CD4-positive, alpha-beta memory T cell (primary cell): ENCODE measurements at regions of chr1 and their contacts with region 1.

Region 1: DNA sequence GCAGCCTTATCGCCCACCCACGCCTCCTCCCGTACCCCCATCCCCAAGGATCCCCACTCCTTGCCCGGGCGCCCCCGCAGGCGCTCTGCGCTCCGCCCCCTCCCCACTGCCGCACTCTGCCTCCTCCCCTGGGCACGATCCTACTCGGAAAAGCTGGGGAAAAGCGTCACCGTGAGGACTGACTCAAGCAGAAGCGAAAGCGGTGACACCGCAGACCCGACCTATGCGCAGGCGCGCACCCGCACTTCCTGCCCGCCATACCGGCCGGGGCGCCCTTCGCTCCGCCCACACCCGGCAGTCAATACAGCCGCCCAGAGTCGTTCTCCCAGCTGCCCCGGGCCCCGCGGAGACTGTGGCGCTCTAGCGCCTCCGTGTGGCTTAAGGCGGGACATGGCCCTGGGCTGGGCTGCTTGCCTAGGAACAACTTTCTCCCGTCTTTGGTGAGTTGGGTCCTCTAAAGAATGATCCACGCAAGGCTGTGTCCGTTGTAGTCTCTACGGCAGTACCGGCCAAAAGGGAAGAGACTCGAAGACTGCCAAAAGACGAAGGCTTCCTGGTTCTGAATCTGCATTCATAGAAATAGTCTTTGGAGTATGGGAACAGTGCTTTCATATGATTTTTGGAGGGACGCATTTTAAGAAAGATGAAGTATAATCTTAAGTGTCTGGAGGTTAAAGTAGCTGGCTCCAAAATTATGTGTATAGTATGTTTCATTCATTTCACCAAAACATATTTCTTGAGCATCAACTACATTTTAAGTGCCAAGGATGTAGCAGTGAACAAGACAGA is at the start of gene OMA1:
- DNase-seq: peak; percentile 96 to 98 (median 97)
- H3K4me3 ChIP-seq: peak within 1 kb of the TSS; percentile 78 to 88
- H3K4me3 Mint-ChIP-seq: peak within 1 kb of the TSS; percentile 93 to 99 (median 96)
- H3K27ac ChIP-seq: peak within 1 kb of the TSS; percentile 94
- H3K27ac Mint-ChIP-seq: peak within 1 kb of the TSS; percentile 95 to 99 (median 99)
- H3K4me1 ChIP-seq: peaks cover 17% of the 10 kb centered on the region
- H3K4me1 Mint-ChIP-seq: peaks cover 19 to 35% (median 23%) of the 10 kb centered on the region in 4 donors
- H3K27me3 ChIP-seq: no peaks in the 10 kb centered on the region
- H3K27me3 Mint-ChIP-seq: peaks cover 0 to 2% of the 10 kb centered on the region in 2 donors
- total RNA-seq, gene OMA1: 73.1 to 86.2 TPM

Region 2: DNA sequence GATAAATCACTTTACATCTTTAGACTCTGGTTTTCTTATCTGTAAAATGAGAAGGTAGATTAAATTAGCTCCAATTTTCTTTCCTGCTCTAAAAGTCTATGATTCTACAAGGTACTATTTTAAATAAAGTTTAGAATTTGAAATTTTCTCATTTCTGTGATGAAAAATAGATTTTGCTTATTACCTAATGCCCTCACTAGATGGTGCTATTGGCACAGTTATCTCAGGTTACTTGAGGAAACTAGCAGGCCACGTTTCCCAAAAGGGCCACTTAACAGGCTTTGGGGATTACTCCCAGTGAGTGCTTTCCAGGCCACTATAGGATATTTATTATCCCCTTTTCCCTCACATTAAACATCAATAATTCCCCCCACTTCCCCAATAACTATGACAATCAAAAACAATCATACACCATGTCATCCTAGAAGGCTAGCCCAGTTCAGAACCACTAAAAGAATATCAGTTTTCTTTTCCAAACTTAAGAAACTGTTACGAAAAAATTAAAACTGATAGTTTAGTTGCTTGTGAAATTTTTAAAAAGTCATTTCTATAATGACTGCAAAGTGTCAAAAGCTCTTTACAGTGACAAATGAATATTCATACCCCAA is 30.8 kb before region 1 on chr1:
- CTCF ChIA-PET with region 1: interaction called, 121 read pairs
- POLR2A ChIA-PET with region 1: interaction called, 24 read pairs
- intact Hi-C with region 1: loop called (anchors 1 kb)
- DNase-seq: peak; percentile 33 to 60 (median 55)
- H3K4me3 ChIP-seq: no peak overlapping the region
- H3K4me3 Mint-ChIP-seq: no peak overlapping the region
- H3K27ac ChIP-seq: no peak overlapping the region
- H3K27ac Mint-ChIP-seq: peak overlapping the region; percentile 54 to 92 (median 77)
- H3K4me1 ChIP-seq: peaks cover 4% of the 10 kb centered on the region
- H3K4me1 Mint-ChIP-seq: peaks cover 5 to 13% (median 7%) of the 10 kb centered on the region in 4 donors
- H3K27me3 ChIP-seq: no peaks in the 10 kb centered on the region
- H3K27me3 Mint-ChIP-seq: no peaks in the 10 kb centered on the region

Region 3: DNA sequence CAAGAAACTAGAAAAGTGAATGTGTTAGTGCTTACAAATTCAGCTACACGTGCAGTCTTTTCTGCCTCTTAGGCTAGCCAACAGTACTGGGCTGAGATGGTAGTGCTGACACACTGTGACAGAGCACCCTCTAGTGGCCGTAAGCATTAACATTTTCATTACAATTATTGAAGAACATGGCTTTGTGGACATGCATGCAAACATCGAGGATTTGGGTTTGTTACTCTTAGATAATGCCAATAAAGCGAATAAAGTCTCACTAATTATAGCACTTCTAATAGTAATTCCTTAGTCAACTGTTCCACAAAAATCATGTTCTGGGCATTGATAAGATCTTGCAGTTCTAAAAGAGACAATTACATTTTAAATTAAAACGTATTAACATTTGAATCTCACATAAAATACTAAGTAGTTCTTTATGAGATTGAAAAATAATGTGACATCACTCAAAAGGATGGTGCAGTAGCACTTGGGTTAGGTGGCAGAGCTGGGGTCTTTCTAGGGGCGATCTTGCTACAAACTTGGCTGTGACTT is 106.0 kb after region 1 on chr1:
- CTCF ChIA-PET with region 1: interaction called, 19 read pairs
- POLR2A ChIA-PET with region 1: interaction called, 4 read pairs
- intact Hi-C with region 1: loop called (anchors 1 kb)
- DNase-seq: peak; percentile 43 to 63 (median 60)
- H3K4me3 ChIP-seq: no peak overlapping the region
- H3K4me3 Mint-ChIP-seq: no peak overlapping the region
- H3K27ac ChIP-seq: no peak overlapping the region
- H3K27ac Mint-ChIP-seq: peak overlapping the region in 1 of 7 donors; percentile 32
- H3K4me1 ChIP-seq: peaks cover 14% of the 10 kb centered on the region
- H3K4me1 Mint-ChIP-seq: peaks cover 11 to 29% (median 15%) of the 10 kb centered on the region in 4 donors
- H3K27me3 ChIP-seq: no peaks in the 10 kb centered on the region
- H3K27me3 Mint-ChIP-seq: no peaks in the 10 kb centered on the region

Region 4: GRCh38 chr1:58699011-58699762 is 152.5 kb after region 1 on chr1:
- CTCF ChIA-PET with region 1: no interaction called
- POLR2A ChIA-PET with region 1: interaction called, 3 read pairs
- intact Hi-C with region 1: loop called (anchors 1 kb)
- DNase-seq: no peak
- H3K4me3 ChIP-seq: peak overlapping the region; percentile 85 to 89
- H3K4me3 Mint-ChIP-seq: peak overlapping the region; percentile 97 to 100 (median 98)
- H3K27ac ChIP-seq: peak overlapping the region; percentile 95
- H3K27ac Mint-ChIP-seq: peak overlapping the region; percentile 92 to 100 (median 99)
- H3K4me1 ChIP-seq: peaks cover 28% of the 10 kb centered on the region
- H3K4me1 Mint-ChIP-seq: peaks cover 15 to 28% (median 18%) of the 10 kb centered on the region in 4 donors
- H3K27me3 ChIP-seq: no peaks in the 10 kb centered on the region
- H3K27me3 Mint-ChIP-seq: no peaks in the 10 kb centered on the region

Region 5: GRCh38 chr1:59296358-59297256 is 749.9 kb after region 1 on chr1 and contains the start of gene FGGY:
- CTCF ChIA-PET with region 1: no interaction called
- POLR2A ChIA-PET with region 1: no interaction called
- intact Hi-C with region 1: loop called (anchors 5 kb)
- DNase-seq: peak; percentile 81 to 90 (median 82)
- H3K4me3 ChIP-seq: peak within 1 kb of the TSS; percentile 62 to 73
- H3K4me3 Mint-ChIP-seq: peak within 1 kb of the TSS; percentile 82 to 94 (median 91)
- H3K27ac ChIP-seq: peak within 1 kb of the TSS; percentile 69
- H3K27ac Mint-ChIP-seq: peak within 1 kb of the TSS; percentile 85 to 96 (median 95)
- H3K4me1 ChIP-seq: peaks cover 18% of the 10 kb centered on the region
- H3K4me1 Mint-ChIP-seq: peaks cover 4 to 25% (median 18%) of the 10 kb centered on the region in 4 donors
- H3K27me3 ChIP-seq: no peaks in the 10 kb centered on the region
- H3K27me3 Mint-ChIP-seq: no peaks in the 10 kb centered on the region
- total RNA-seq, gene FGGY: 5.3 to 8.8 TPM

Region 6: DNA sequence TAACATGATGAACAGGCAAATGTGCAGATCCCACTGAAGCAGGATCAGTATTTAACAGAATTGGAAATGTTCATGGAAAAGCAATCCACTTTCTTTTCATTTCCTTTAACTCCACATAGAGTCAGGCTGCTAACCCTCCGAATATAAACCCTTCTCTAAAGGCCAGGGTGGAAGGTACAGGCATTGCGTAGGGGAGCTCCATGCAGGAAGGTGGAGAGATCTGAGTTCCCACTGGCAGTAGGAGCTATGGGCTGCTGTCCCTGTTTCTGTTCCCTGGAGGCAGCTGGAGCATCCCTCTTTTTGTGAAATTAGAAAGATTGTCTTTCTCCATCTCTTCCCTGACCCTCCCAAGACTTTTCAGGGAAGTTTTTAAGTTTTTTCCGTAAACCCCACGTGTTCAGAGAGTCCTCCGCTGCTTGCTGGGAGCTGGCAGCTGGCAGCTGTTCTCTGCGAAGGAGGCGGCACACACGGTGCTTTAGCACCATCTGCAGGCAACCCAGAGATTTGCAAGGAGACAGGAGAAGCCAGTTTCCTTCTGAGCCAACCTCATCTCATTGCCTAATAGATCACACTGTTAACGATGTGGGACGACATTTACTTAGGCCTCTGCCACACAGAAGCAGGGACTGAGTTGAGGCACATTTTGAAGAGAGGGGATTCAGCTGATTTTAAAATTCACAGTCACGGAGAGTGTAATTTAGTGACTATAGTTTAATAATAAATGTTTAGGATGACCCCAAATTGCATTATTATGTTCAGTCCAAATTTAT is 1212.6 kb after region 1 on chr1:
- CTCF ChIA-PET with region 1: interaction called, 7 read pairs
- POLR2A ChIA-PET with region 1: no interaction called
- intact Hi-C with region 1: loop called (anchors 1 kb)
- DNase-seq: peak; percentile 58 to 67 (median 63)
- H3K4me3 ChIP-seq: no peak overlapping the region
- H3K4me3 Mint-ChIP-seq: peak overlapping the region in 3 of 8 donors; percentile 47 to 59 (median 59)
- H3K27ac ChIP-seq: no peak overlapping the region
- H3K27ac Mint-ChIP-seq: peak overlapping the region in 1 of 7 donors; percentile 53
- H3K4me1 ChIP-seq: peaks cover 3% of the 10 kb centered on the region
- H3K4me1 Mint-ChIP-seq: peaks cover 0 to 4% (median 3%) of the 10 kb centered on the region in 4 donors
- H3K27me3 ChIP-seq: no peaks in the 10 kb centered on the region
- H3K27me3 Mint-ChIP-seq: no peaks in the 10 kb centered on the region

Region 7: DNA sequence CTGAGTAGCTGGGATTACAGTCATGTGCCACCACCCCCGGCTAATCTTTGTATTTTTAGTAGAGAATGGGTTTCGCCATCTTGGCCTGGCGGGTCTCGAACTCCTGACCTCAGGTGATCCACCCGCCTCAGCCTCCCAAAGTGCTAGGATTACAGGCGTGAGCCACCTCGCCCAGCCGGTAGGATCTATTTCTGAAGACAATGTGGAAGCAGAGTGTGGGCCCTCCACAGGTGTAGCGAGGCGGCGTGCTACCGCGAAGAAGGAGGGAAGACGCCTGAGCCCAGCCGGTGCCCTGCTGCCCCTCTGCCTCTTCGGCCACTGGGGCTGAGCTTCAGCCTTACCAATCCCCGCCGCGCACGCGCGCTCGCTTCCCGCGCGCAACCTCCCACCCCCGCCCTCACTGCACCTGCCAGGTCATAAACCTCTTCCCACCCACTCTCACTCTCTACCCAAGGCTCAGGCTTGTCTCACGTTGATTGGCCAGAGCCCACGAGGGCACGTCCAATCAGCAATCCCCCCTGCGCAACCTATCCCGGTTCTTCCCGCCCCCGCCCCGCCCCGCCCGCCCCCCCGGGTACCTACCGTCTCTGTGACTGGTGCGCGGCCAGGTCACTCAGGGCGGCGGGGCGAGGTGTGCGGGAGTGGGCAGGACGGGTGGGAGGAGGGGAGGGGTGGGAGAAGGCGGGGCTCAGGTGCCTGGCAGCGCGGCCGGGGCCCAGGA is 1267.6 kb after region 1 on chr1:
- CTCF ChIA-PET with region 1: no interaction called
- POLR2A ChIA-PET with region 1: interaction called, 4 read pairs
- intact Hi-C with region 1: loop called (anchors 1 kb)
- DNase-seq: peak; percentile 86 to 94 (median 92)
- H3K4me3 ChIP-seq: peak overlapping the region in 1 of 2 donors; percentile 52
- H3K4me3 Mint-ChIP-seq: peak overlapping the region in 5 of 8 donors; percentile 82 to 93 (median 88)
- H3K27ac ChIP-seq: peak overlapping the region; percentile 70
- H3K27ac Mint-ChIP-seq: peak overlapping the region in 6 of 7 donors; percentile 79 to 96 (median 91)
- H3K4me1 ChIP-seq: peaks cover 20% of the 10 kb centered on the region
- H3K4me1 Mint-ChIP-seq: peaks cover 3 to 6% (median 5%) of the 10 kb centered on the region in 4 donors
- H3K27me3 ChIP-seq: no peaks in the 10 kb centered on the region
- H3K27me3 Mint-ChIP-seq: peaks cover 10 to 14% of the 10 kb centered on the region in 2 donors